ENCODE measurements at regions of chr5 and their contacts with region 1.

Region 1: GRCh38 chr5:150217873-150218692 is 28.2 kb downstream of the SLC6A7 start:
- DNase-seq: peak; percentile 87
- H3K4me3 Mint-ChIP-seq: no peak overlapping the region
- H3K27ac Mint-ChIP-seq: no peak overlapping the region
- H3K4me1 Mint-ChIP-seq: no peaks in the 10 kb centered on the region
- H3K27me3 Mint-ChIP-seq: peaks cover 4% of the 10 kb centered on the region

Region 2: DNA sequence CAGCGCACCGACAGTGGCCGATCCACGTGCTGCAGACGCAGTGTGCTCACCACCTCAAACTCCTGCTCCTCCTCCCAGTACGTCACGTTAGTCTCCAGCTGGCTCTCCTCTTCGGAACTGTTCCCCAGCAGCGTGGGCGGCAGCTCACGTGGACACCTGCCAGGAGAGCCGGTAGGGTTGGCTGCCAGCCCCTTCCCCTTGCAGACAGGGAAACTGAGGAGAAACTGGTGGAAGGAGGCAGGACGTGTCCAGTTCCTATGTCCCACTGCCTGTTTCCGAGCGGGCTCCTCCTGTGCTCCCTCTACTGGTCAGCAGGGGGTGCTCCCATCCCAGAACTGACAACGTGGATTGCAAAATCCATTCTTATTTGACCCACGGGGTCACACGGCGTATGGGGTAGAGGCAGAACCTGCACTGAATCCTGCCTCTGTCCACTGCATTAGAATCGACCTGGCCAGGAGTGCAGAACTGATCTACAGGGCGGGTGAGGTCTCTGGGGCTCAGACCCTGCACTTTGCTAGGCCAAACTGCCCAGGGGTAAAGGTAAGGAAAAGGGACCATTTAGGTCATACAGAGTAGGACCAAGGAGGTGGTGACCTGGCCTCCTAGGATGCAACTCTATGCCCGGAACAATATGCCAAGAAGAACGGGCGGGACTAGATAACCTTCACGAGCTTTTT is 88.1 kb before region 1 on chr5:
- CTCF ChIA-PET with region 1: interaction called, 15 read pairs
- POLR2A ChIA-PET with region 1: no interaction called
- intact Hi-C with region 1: loop called (anchors 1 kb)
- DNase-seq: peak; percentile 68
- H3K4me3 Mint-ChIP-seq: no peak overlapping the region
- H3K27ac Mint-ChIP-seq: no peak overlapping the region
- H3K4me1 Mint-ChIP-seq: no peaks in the 10 kb centered on the region
- H3K27me3 Mint-ChIP-seq: no peaks in the 10 kb centered on the region

Region 3: GRCh38 chr5:150161242-150162141 is 56.6 kb before region 1 on chr5:
- CTCF ChIA-PET with region 1: interaction called, 18 read pairs
- POLR2A ChIA-PET with region 1: no interaction called
- intact Hi-C with region 1: loop called (anchors 1 kb)
- DNase-seq: peak; percentile 84
- H3K4me3 Mint-ChIP-seq: no peak overlapping the region
- H3K27ac Mint-ChIP-seq: no peak overlapping the region
- H3K4me1 Mint-ChIP-seq: no peaks in the 10 kb centered on the region
- H3K27me3 Mint-ChIP-seq: peaks cover 20% of the 10 kb centered on the region